H1 (cell line): ENCODE measurements at regions of chr2 and their contacts with region 1.

Region 1: GRCh38 chr2:95165129-95166064 is at the start of gene ZNF2:
- DNase-seq: peak; percentile 93 to 95
- H3K4me3 ChIP-seq: peak within 1 kb of the TSS; percentile 87 to 100 (median 98)
- H3K27ac ChIP-seq: peak within 1 kb of the TSS; percentile 97
- H3K4me1 ChIP-seq: peaks cover 0 to 2% (median 0%) of the 10 kb centered on the region in 4 experiments; a peak in 2 of 7 replicates
- H3K27me3 ChIP-seq: no peaks in the 10 kb centered on the region; a peak in 1 of 7 replicates
- CTCF ChIP-seq: no peak
- EP300 ChIP-seq: no peak
- POLR2A ChIP-seq: peak; percentile 81 to 94
- RAD21 ChIP-seq: no peak
- total RNA-seq, gene ZNF2: 2.9 and 3.0 TPM in 2 replicates

Region 2: GRCh38 chr2:95121407-95122196 is 43.8 kb before region 1 on chr2 and contains the start of gene MRPS5:
- CTCF ChIA-PET with region 1: interaction called, 5 read pairs
- POLR2A ChIA-PET with region 1: interaction called, 10 read pairs
- DNase-seq: peak in 1 of 2 experiments; percentile 95
- H3K4me3 ChIP-seq: peak within 1 kb of the TSS; percentile 91 to 98 (median 96)
- H3K27ac ChIP-seq: peak within 1 kb of the TSS; percentile 97
- H3K4me1 ChIP-seq: peaks cover 0 to 3% (median under 1%) of the 10 kb centered on the region in 4 experiments; a peak in 2 of 7 replicates
- H3K27me3 ChIP-seq: no peaks in the 10 kb centered on the region; a peak in 1 of 7 replicates
- CTCF ChIP-seq: no peak
- EP300 ChIP-seq: no peak
- POLR2A ChIP-seq: peak; percentile 61 to 77
- RAD21 ChIP-seq: no peak; a peak in 1 of 4 replicates
- total RNA-seq, gene MRPS5: 52.8 and 53.0 TPM in 2 replicates